Posterior cingulate gyrus (tissue), 11 donors: ENCODE measurements at regions of chr12 and their contacts with region 1.

Region 1: DNA sequence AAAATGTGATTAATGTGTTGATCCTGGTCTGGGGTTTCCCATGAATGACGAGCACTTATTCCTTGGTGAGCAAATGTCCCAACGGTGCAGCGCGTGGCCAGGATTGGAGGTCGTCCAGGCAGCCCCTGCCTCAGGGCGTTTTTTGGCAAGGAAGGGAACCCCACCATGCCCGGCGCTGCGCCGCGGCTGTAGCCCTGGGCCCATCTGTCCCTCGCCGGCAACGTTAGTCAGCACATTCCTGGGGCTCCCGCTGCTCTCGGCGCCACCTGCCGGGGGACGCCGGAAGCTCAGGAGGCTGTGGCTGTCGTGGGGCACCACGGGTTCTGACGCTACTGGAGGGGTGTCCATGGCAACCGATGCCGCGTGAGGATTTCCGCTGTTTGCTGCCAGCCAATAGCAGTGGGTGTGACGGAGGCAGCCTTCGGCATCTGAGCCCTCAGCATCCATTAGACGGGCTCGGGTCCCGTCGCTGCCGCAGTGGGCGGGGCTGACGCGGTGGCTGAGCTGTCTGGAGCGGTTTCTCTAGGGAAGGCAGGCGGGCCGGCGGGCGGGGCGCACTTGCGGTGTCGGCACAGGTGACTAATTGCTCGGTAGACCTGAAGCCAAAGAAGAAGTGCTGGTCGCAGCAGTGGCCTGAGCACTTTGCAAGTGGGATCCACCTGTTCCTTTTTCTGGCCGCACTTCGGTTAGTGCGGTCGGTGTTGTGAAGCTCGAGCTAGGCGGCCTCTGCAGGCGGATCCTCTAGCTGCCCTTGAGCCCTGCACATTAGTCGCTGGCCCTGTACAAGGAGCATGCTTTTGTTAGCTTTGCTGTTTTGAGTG is 29.5 kb downstream of the RAB35 start:
- DNase-seq: peak; percentile 99 to 100 (median 100)

Region 2: DNA sequence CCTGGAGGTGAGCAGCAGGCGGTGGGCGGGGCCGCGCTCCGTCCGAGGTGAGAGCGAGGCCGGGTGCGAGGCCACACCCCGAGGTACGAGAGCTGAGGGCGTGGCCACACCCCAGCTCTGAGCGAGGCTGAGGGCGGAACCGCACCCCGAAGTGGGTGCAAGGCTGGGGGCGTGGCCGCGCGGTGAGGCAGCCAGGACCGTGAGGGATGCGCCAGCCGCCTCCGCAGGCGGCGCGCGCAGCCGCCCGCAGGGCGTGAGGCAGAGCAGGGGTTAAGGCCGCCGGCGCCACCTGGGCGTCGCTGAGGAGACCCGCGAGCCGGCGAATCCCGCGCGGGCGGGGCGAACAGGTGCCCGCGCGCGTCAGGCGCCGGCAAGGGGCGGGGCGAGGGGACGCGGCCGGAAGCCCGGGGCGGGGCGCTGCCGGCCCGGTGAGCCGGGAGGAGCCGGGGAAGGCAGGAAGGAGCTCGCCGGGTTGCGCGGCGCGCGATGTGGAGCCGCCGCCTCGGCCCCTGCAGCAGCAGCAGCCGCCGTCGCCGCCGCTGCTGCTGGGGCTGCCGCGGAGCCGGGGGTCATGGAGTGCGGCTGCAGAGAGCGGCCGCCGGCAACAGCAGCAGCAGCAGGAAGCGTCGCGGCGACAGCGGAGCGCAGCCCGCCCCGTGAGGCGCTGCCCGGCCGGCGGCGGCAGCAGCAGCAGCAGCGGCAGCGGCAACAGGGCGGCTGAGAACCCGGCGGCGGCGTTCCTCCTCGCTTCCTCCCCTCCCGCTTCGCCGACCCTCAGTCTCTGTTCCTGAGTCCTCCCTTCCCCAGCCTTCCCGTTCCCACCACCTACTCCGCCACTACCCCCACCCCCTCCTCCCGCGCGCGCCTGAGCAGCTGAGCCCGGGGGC is 98.0 kb before region 1 on chr12 and contains the start of gene BICDL1:
- intact Hi-C with region 1: loop called (anchors 1 kb)
- DNase-seq: peak in 9 of 10 donors; percentile 50 to 96 (median 73)

Region 3: GRCh38 chr12:120116792-120117651 is 30.0 kb after region 1 on chr12:
- intact Hi-C with region 1: loop called (anchors 2 kb)
- DNase-seq: peak; percentile 63 to 98 (median 88)